Heart right ventricle (tissue), 16 donors: ENCODE measurements at regions of chr3 and their contacts with region 1.

Region 1: GRCh38 chr3:98602078-98602678 is 8.8 kb upstream of the CPOX start:
- DNase-seq: peak in 1 of 2 donors; percentile 50
- ATAC-seq: peak; percentile 61 to 90 (median 86)
- H3K4me3 ChIP-seq: no peak overlapping the region
- H3K27ac ChIP-seq: no peak overlapping the region
- H3K4me1 ChIP-seq: peaks cover 0 to 6% (median 0%) of the 10 kb centered on the region in 9 donors
- H3K27me3 ChIP-seq: no peaks in the 10 kb centered on the region
- CTCF ChIP-seq: peak; percentile 55 to 88 (median 74)

Region 2: GRCh38 chr3:98500039-98500438 is 102.1 kb before region 1 on chr3:
- intact Hi-C with region 1: no loop called
- DNase-seq: no peak
- ATAC-seq: no peak
- H3K4me3 ChIP-seq: no peak overlapping the region
- H3K27ac ChIP-seq: no peak overlapping the region
- H3K4me1 ChIP-seq: no peaks in the 10 kb centered on the region
- H3K27me3 ChIP-seq: no peaks in the 10 kb centered on the region
- CTCF ChIP-seq: no peak

Region 3: GRCh38 chr3:98705706-98706105 is 103.5 kb after region 1 on chr3:
- intact Hi-C with region 1: loop called in 2 of 10 experiments (anchors 10 kb)
- DNase-seq: no peak
- ATAC-seq: no peak
- H3K4me3 ChIP-seq: no peak overlapping the region
- H3K27ac ChIP-seq: no peak overlapping the region
- H3K4me1 ChIP-seq: peaks cover 0 to 28% (median 15%) of the 10 kb centered on the region in 9 donors
- H3K27me3 ChIP-seq: no peaks in the 10 kb centered on the region
- CTCF ChIP-seq: peak in 3 of 9 donors; percentile 17 to 23 (median 18)

Region 4: DNA sequence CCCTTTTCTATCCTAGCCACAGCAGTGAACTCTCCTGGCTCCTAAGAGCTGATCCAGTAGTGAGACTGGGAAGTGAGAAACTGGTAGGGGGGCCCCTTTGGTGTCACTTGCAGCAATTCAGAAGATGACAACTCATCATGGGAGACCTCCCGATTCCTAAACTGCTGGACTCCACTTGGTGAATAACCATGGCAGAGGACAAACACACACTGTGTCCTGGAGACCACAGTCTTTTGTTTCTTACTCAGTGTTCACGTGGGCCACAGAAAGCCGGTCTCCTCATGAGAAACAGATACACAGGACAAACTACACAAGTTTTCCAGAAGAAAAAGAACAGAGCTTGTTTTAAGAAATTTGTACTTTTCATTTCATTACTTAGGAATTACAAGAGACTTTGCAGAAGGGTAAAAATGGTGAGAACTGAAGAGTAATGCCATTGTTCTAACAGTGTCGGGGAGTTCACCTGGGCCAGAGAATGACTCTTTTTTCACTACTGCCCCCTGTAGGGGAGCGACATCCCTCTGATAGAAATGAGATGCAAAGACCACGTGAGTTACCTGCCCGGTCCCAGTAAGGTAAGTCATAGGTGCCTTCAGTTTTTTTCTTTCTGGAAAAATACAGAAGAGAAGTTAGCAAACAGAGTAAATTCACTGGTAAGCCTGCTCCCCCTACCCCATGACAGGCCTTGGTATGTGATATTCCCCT is 199.0 kb after region 1 on chr3:
- intact Hi-C with region 1: loop called in 4 of 10 experiments (anchors 5 kb)
- DNase-seq: no peak
- ATAC-seq: peak in 2 of 8 donors; percentile 10 to 34
- H3K4me3 ChIP-seq: no peak overlapping the region
- H3K27ac ChIP-seq: no peak overlapping the region
- H3K4me1 ChIP-seq: no peaks in the 10 kb centered on the region
- H3K27me3 ChIP-seq: no peaks in the 10 kb centered on the region
- CTCF ChIP-seq: peak in 5 of 9 donors; percentile 6 to 20 (median 11)

Region 5: GRCh38 chr3:98811048-98811447 is 208.9 kb after region 1 on chr3:
- intact Hi-C with region 1: loop called (anchors 1 to 5 kb)
- DNase-seq: no peak
- ATAC-seq: no peak
- H3K4me3 ChIP-seq: no peak overlapping the region
- H3K27ac ChIP-seq: peak overlapping the region in 1 of 10 donors; percentile 77
- H3K4me1 ChIP-seq: peaks cover 0 to 26% (median 14%) of the 10 kb centered on the region in 9 donors
- H3K27me3 ChIP-seq: no peaks in the 10 kb centered on the region
- CTCF ChIP-seq: no peak

Region 6: DNA sequence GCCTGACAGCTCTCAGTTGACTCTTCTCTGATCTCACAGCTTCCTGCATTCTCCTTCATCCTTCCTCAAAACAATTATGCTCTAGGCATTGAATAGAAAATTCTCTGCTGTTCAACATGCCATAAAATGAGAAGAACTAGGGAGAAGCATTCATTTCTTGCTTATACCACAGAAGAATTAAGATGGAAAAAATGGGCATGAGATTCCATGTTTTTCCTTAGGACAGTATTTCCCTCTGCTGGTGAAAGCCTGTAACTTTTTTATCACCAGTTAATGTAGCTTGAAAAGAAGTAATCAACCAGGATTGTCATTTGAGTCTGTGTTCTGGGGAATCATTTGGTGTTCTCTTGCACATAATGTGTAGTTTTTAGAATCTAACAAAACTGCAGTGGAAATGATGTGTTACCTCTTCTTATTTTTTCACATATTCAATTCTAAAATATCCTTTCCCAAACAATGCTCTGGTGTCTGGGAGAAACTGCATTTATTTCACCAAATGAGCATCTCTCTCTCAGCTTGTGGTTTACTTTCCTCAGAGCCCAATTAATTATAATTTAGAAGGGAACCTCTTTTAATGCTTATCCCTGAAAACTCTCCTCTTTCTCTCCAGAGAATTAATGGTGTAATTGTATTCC is 392.1 kb after region 1 on chr3:
- intact Hi-C with region 1: loop called in 9 of 10 experiments (anchors 1 to 10 kb)
- DNase-seq: no peak
- ATAC-seq: peak in 2 of 8 donors; percentile 42
- H3K4me3 ChIP-seq: no peak overlapping the region
- H3K27ac ChIP-seq: no peak overlapping the region
- H3K4me1 ChIP-seq: no peaks in the 10 kb centered on the region
- H3K27me3 ChIP-seq: no peaks in the 10 kb centered on the region
- CTCF ChIP-seq: peak; percentile 48 to 81 (median 70)